HCT116 (cell line): ENCODE measurements at regions of chr17 and their contacts with region 1.

Region 1: DNA sequence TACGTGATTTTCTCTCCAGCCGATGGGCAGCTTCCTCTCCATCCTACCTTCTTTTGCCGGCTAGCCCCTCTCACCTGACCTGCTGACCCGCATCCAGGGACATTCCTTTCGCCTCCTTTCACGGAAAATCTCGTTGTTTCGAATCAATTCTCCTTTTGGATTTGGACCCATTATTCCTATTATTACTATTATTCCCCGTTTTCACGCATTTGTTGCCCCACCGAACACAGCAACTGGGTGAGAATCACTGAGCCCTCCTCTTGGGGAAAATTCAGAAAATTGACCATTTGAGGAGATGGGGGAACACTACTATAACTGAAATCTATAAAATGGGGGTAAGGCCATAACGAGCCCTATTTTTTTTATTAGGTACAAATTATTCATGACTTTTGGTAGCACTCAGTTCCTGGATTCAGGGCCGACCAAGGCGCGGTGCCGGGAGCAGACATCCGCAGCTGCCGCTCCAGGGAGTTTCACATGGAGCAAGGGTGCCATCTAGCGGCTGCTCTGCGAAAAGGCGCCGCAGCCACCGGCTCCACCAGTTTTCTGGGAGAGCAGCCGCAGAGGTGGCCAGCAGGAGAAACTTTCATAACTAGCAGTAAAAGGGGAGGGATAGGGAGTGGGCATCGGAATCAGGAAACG is 3.3 kb upstream of the HOXB8 start:
- DNase-seq: peak; percentile 74
- ATAC-seq: peak; percentile 71
- H3K4me3 ChIP-seq: peak overlapping the region; percentile 80 to 90
- H3K27ac ChIP-seq: peak overlapping the region; percentile 88
- H3K4me1 ChIP-seq: peaks cover 8 to 37% of the 10 kb centered on the region in 2 experiments; a peak in 3 of 4 replicates
- H3K27me3 ChIP-seq: no peaks in the 10 kb centered on the region
- CTCF ChIP-seq: peak; percentile 97 to 100 (median 98); a peak in 5 of 6 replicates
- POLR2A ChIP-seq: no peak
- RAD21 ChIP-seq: peak; percentile 99

Region 2: GRCh38 chr17:48153691-48154358 is 464.6 kb before region 1 on chr17:
- CTCF ChIA-PET with region 1: interaction called, 6 read pairs
- POLR2A ChIA-PET with region 1: no interaction called
- RAD21 ChIA-PET with region 1: no interaction called
- intact Hi-C with region 1: loop called (anchors 1 kb)
- DNase-seq: peak; percentile 45
- ATAC-seq: peak; percentile 95
- H3K4me3 ChIP-seq: no peak overlapping the region
- H3K27ac ChIP-seq: no peak overlapping the region
- H3K4me1 ChIP-seq: peaks cover 3 to 6% of the 10 kb centered on the region in 2 experiments; a peak in 3 of 4 replicates
- H3K27me3 ChIP-seq: peaks cover 25% of the 10 kb centered on the region; the same call in 1 of the 2 replicates
- CTCF ChIP-seq: peak; percentile 80 to 87 (median 83)
- POLR2A ChIP-seq: no peak
- RAD21 ChIP-seq: peak; percentile 86

Region 3: DNA sequence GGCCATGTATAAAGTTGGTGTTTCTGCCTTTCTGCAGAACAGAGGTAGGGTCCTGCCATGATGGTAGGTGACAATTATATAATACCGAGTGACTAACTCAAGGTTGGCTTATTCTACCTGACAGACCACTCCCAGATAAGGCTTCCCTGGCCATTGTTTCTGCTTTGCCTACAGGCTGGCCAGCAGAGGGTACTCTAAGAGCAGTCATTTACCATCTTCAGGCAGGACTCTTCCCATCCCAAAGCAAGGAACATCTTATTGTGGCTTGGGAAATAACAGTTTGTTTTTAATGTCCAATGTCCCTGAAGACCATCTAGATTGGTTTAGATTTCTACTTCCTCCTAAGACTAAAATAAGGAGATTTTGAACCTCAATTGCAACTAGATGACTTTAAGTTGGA is 436.7 kb before region 1 on chr17:
- CTCF ChIA-PET with region 1: no interaction called
- POLR2A ChIA-PET with region 1: interaction called, 3 read pairs
- RAD21 ChIA-PET with region 1: no interaction called
- intact Hi-C with region 1: loop called (anchors 1 kb)
- DNase-seq: peak; percentile 44
- ATAC-seq: peak; percentile 96
- H3K4me3 ChIP-seq: no peak overlapping the region
- H3K27ac ChIP-seq: no peak overlapping the region
- H3K4me1 ChIP-seq: no peaks in the 10 kb centered on the region
- H3K27me3 ChIP-seq: no peaks in the 10 kb centered on the region
- CTCF ChIP-seq: peak; percentile 73 to 86 (median 83); a peak in 5 of 6 replicates
- POLR2A ChIP-seq: no peak
- RAD21 ChIP-seq: peak; percentile 88

Region 4: DNA sequence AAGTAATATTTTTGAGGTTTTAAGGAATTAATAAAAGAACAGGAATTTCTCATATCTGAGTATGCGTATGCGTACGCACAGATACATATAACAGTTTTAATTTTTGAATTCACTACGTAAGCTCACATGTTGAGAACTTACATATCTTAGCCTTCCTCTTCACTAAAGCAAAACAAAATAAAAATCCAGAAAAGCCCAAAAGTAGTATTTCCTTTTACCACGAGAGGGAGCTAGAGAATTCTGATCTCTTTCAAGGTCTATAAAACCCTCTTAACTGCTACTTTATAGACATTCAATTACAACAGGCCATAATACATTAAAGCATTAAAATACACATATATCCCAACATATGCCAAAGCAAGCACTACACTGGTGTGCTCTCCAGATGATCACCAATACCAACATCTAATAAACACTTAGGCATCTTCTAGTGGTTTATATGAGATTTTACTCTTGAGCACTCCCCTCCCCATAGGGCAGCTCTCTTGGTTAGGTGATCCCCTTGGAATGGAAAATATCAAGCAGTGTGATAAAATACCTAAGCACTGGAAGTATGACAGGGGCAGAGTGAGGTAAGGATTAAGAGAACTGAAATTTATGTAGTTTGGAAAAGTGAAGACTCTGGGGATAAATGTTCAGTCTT is 282.4 kb before region 1 on chr17:
- CTCF ChIA-PET with region 1: interaction called, 18 read pairs
- POLR2A ChIA-PET with region 1: interaction called, 5 read pairs
- RAD21 ChIA-PET with region 1: interaction called in 1 of 2 experiments, 5 read pairs
- intact Hi-C with region 1: loop called (anchors 2 kb)
- DNase-seq: peak; percentile 78
- ATAC-seq: peak; percentile 85
- H3K4me3 ChIP-seq: no peak overlapping the region
- H3K27ac ChIP-seq: no peak overlapping the region
- H3K4me1 ChIP-seq: peaks cover 0 to 9% of the 10 kb centered on the region in 2 experiments; a peak in 2 of 4 replicates
- H3K27me3 ChIP-seq: no peaks in the 10 kb centered on the region
- CTCF ChIP-seq: peak; percentile 64 to 93 (median 92)
- POLR2A ChIP-seq: no peak
- RAD21 ChIP-seq: peak; percentile 85

Region 5: DNA sequence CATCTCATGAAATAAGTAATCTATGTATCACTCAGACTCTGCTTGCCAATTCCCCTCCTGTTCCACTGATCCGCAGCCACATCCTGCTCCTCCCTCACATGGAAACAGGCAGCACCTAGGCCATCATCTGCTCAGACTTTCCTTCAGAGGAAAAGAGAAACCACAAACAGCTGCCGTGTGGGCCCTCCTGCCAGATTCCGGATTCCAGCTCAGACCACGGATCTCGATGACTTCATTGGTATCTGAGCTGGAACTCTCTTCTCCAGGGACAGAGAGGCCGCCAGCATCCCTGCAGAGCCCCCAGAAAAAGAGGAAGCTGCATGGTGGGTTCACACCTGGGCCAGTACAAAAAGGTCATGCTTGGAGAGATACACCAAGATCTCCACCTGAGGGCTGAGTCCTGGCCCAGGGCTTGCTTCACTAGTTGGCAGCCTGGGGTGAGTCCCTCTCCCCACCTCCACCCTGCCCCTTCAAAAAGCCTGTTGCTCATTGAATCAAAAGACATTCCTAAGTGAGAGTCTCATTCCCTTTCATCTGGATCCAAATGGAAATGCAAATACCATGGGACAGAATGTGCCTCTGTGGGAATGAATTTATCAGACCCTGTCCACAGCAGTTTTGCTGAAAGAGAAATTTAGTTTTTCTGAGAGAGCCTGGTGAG is 134.8 kb before region 1 on chr17:
- CTCF ChIA-PET with region 1: no interaction called
- POLR2A ChIA-PET with region 1: no interaction called
- RAD21 ChIA-PET with region 1: no interaction called
- intact Hi-C with region 1: loop called (anchors 10 kb)
- DNase-seq: peak; percentile 95
- ATAC-seq: peak; percentile 77
- H3K4me3 ChIP-seq: peak overlapping the region; percentile 8 to 32; a peak in 3 of 4 replicates
- H3K27ac ChIP-seq: peak overlapping the region; percentile 83
- H3K4me1 ChIP-seq: peaks cover 57 to 79% of the 10 kb centered on the region in 2 experiments
- H3K27me3 ChIP-seq: no peaks in the 10 kb centered on the region
- CTCF ChIP-seq: no peak
- POLR2A ChIP-seq: no peak
- RAD21 ChIP-seq: peak; percentile 2